WTC11 (cell line): ENCODE measurements at regions of chr9 and their contacts with region 1.

Region 1: DNA sequence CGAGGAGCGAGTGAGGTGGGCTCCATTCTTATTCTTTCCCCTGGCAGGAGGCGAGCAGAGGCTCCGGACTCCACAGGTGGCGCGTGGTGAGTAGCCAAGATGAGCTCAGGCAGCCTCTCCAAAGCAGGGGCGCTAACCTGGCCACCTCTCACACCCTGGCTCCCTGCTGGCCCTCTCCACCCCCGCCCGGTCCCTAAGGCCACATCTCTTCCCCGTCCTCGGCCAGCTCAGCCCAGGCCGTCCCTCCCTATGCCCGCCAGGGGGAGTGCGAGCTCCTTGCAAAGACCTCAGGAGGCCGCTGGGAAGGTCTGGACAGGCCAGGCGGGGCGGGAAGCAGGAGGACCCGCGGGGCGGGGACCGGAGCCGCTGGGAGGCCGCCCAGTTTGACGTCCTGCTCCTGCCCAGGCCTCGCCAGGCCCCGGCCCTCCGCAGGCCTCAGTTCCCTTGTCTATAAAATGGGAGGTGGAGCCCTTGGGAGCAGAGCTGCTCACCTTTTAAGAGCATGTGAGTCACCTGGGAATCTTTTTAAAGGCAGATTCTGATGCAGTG is 46.3 kb upstream of the GGTA1 start:
- DNase-seq: peak; percentile 98
- ATAC-seq: peak; percentile 93
- H3K4me3 Mint-ChIP-seq: peak overlapping the region; percentile 33; the same call in 1 of the 2 replicates
- H3K27ac Mint-ChIP-seq: no peak overlapping the region
- H3K4me1 Mint-ChIP-seq: peaks cover 8% of the 10 kb centered on the region
- H3K27me3 Mint-ChIP-seq: peaks cover 17% of the 10 kb centered on the region
- CTCF ChIP-seq: peak; percentile 85

Region 2: GRCh38 chr9:121478816-121479676 is 66.9 kb before region 1 on chr9:
- CTCF ChIA-PET with region 1: no interaction called
- POLR2A ChIA-PET with region 1: no interaction called
- DNase-seq: no peak
- ATAC-seq: no peak
- H3K4me3 Mint-ChIP-seq: no peak overlapping the region
- H3K27ac Mint-ChIP-seq: no peak overlapping the region
- H3K4me1 Mint-ChIP-seq: peaks cover 13% of the 10 kb centered on the region
- H3K27me3 Mint-ChIP-seq: peaks cover 3% of the 10 kb centered on the region; the same call in 1 of the 2 replicates
- CTCF ChIP-seq: no peak

Region 3: DNA sequence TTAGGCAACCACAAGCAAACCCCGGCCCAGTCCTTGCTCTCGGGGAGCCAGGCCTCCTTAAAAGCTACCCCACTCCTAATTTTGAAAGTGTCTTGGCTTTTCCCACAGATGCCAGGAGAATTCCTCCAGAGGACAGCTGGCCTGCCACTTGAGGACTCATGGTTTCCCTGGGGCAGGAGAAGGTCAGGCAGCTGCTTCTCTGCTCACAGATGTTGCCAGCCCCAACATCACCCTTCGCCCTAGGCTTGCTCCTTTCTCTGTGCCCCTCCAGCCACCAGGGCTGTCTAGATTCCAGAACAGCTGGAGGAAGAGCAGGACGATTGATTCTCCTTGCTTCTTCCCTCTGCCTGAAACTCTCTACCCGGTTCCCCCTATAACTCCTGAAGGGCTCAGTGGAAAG is 54.8 kb before region 1 on chr9:
- CTCF ChIA-PET with region 1: interaction called, 11 read pairs
- POLR2A ChIA-PET with region 1: no interaction called
- DNase-seq: no peak
- ATAC-seq: no peak
- H3K4me3 Mint-ChIP-seq: no peak overlapping the region
- H3K27ac Mint-ChIP-seq: no peak overlapping the region
- H3K4me1 Mint-ChIP-seq: no peaks in the 10 kb centered on the region
- H3K27me3 Mint-ChIP-seq: peaks cover 7% of the 10 kb centered on the region
- CTCF ChIP-seq: no peak

Region 4: GRCh38 chr9:121581786-121582600 is 36.0 kb after region 1 on chr9:
- CTCF ChIA-PET with region 1: interaction called, 28 read pairs
- POLR2A ChIA-PET with region 1: no interaction called
- DNase-seq: no peak
- ATAC-seq: peak; percentile 62
- H3K4me3 Mint-ChIP-seq: no peak overlapping the region
- H3K27ac Mint-ChIP-seq: no peak overlapping the region
- H3K4me1 Mint-ChIP-seq: peaks cover 27% of the 10 kb centered on the region
- H3K27me3 Mint-ChIP-seq: peaks cover 3% of the 10 kb centered on the region
- CTCF ChIP-seq: no peak

Region 5: GRCh38 chr9:121621113-121621449 is 75.1 kb after region 1 on chr9:
- CTCF ChIA-PET with region 1: interaction called, 22 read pairs
- POLR2A ChIA-PET with region 1: no interaction called
- DNase-seq: peak; percentile 74
- ATAC-seq: peak; percentile 97
- H3K4me3 Mint-ChIP-seq: no peak overlapping the region
- H3K27ac Mint-ChIP-seq: peak overlapping the region; percentile 32
- H3K4me1 Mint-ChIP-seq: peaks cover 20% of the 10 kb centered on the region
- H3K27me3 Mint-ChIP-seq: no peaks in the 10 kb centered on the region
- CTCF ChIP-seq: no peak

Region 6: GRCh38 chr9:121686930-121687541 is 141.1 kb after region 1 on chr9:
- CTCF ChIA-PET with region 1: interaction called, 27 read pairs
- POLR2A ChIA-PET with region 1: no interaction called
- DNase-seq: peak; percentile 89
- ATAC-seq: peak; percentile 80
- H3K4me3 Mint-ChIP-seq: no peak overlapping the region
- H3K27ac Mint-ChIP-seq: no peak overlapping the region
- H3K4me1 Mint-ChIP-seq: peaks cover 21% of the 10 kb centered on the region
- H3K27me3 Mint-ChIP-seq: no peaks in the 10 kb centered on the region
- CTCF ChIP-seq: peak; percentile 68; the same call in 1 of the 2 replicates

Region 7: GRCh38 chr9:121929893-121930875 is 384.2 kb after region 1 on chr9:
- CTCF ChIA-PET with region 1: interaction called, 23 read pairs
- POLR2A ChIA-PET with region 1: no interaction called
- DNase-seq: peak; percentile 79
- ATAC-seq: peak; percentile 97
- H3K4me3 Mint-ChIP-seq: no peak overlapping the region
- H3K27ac Mint-ChIP-seq: no peak overlapping the region
- H3K4me1 Mint-ChIP-seq: peaks cover 5% of the 10 kb centered on the region
- H3K27me3 Mint-ChIP-seq: no peaks in the 10 kb centered on the region; the same call in 1 of the 2 replicates
- CTCF ChIP-seq: peak; percentile 32